ENCODE measurements at regions of chr11 and their contacts with region 1.

Region 1: DNA sequence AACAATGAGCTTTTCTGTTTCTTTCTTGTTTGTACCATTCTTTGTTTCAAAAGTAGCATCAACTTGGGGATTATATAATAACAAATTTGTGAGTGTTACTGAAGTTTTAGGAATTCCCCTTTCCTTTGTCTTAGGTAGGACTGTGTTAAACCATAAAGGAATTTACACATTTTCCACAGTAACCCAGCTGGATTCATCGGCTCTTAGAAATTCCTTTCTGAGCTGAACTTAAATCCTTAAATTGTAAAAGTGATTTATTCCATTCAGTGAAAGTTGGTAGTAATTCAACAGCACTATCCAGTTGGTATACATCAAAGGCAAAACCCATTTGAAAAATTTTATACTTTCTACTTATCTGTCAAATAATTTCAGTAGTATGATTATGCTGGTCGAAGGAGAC is 11.8 kb downstream of the EMSY start:
- H3K4me3 Mint-ChIP-seq: no peak overlapping the region
- H3K27ac Mint-ChIP-seq: no peak overlapping the region
- H3K4me1 Mint-ChIP-seq: peaks cover 12% of the 10 kb centered on the region
- H3K27me3 Mint-ChIP-seq: no peaks in the 10 kb centered on the region

Region 2: GRCh38 chr11:75996523-75997442 is 459.8 kb before region 1 on chr11:
- intact Hi-C with region 1: no loop called
- H3K4me3 Mint-ChIP-seq: no peak overlapping the region
- H3K27ac Mint-ChIP-seq: no peak overlapping the region
- H3K4me1 Mint-ChIP-seq: no peaks in the 10 kb centered on the region
- H3K27me3 Mint-ChIP-seq: no peaks in the 10 kb centered on the region

Region 3: GRCh38 chr11:76410851-76411357 is 45.7 kb before region 1 on chr11:
- intact Hi-C with region 1: no loop called
- H3K4me3 Mint-ChIP-seq: no peak overlapping the region
- H3K27ac Mint-ChIP-seq: no peak overlapping the region
- H3K4me1 Mint-ChIP-seq: no peaks in the 10 kb centered on the region
- H3K27me3 Mint-ChIP-seq: peaks cover 8% of the 10 kb centered on the region

Region 4: DNA sequence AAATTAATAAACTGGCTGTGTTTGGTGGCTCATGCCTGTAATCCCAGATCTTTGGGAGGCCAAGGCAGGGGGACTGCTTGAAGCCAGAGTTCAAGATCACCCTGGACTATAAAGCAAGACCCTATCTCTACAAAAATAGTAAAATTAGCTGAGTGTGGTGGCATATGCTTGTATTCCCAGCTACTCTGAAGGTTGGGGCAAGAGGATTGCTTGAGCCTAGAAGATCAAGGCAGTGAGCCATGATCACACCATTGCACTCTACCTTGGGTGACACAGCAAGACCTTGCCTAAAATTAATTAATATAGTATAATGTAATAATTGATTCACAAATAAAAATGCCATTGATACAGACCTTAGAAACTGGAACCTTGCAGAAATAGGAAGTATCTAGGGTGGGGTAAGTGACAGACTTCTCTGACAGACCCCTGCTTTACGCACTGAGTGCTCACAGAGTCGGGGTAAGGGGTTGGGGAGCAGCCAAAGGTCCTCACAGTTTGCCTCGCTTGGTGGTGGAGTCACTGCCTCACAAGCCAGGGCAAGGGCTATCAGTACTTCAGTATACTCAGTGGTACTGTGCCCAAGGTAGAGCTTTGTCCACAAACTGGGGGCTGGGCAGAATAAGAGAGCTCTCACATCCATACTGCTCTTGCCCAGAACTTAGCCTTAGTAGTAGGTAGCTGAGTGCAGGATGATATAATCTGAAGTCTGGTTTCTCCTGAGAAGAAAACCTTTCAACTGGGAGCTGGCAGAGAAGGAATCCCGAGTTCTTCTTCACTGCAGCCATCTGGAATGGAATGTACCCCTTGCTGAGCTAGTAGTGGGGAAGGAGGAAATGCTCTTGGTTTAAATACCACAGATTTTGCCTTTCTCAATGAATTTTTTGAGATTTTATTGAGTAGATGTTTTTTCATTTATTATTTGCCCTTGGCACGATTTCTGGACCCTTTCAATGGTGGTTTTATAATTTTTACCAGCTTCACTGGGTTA is 53.8 kb after region 1 on chr11:
- intact Hi-C with region 1: loop called (anchors 2 kb)
- H3K4me3 Mint-ChIP-seq: no peak overlapping the region
- H3K27ac Mint-ChIP-seq: no peak overlapping the region
- H3K4me1 Mint-ChIP-seq: no peaks in the 10 kb centered on the region
- H3K27me3 Mint-ChIP-seq: no peaks in the 10 kb centered on the region

Measured in dendritic cell treated with granulocyte-macrophage colony-stimulating factor and Interleukin-4, amounts not matched to agents 40 ng/mL and 50 ng/mL, for 4 days (primary cell).